GM12878 (cell line): ENCODE measurements at regions of chr12 and their contacts with region 1.

Region 1: DNA sequence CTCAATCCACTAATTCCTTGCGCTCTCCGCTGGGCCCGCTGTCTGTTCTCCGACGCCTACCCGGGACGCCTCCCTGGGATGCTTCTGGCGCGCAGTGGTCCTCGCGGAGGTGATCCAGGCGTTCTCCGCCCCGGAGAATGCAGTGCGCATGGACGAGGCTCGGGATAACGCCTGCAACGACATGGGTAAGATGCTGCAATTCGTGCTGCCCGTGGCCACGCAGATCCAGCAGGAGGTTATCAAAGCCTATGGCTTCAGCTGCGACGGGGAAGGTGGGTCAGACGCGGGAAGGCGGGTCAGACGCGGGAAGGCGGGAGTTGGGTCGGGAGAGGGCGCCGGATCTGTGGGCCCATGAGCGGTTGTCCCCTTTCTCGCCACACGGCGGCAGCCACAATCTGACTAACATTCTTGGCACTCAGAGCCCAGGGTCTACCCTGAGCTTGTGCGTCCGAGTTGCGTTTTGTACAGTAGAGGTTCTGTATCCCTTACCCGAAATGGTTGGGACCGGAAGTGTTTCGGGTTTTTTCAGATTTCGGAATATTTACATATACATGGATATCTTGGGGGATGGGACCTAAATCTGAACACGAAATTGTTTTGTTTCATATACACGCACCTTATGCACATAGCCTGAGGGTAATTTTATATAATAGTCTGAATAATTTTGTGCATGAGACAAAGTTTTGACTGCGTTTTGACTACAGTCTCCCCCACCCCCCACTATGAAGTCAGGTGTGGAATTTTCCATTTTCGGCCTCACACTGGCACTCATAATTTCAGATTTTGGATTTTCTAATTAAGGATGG is 762 bp downstream of the C12orf57 start:
- DNase-seq: peak; percentile 85
- ATAC-seq: peak; percentile 69
- H3K4me3 ChIP-seq: peak overlapping the region; percentile 78
- H3K27ac ChIP-seq: peak overlapping the region; percentile 91
- H3K4me1 ChIP-seq: peaks cover 36% of the 10 kb centered on the region
- H3K27me3 ChIP-seq: no peaks in the 10 kb centered on the region
- CTCF ChIP-seq: peak; percentile 85 to 99 (median 95); a peak in 5 of 6 replicates
- EP300 ChIP-seq: no peak
- POLR2A ChIP-seq: peak; percentile 87
- RAD21 ChIP-seq: peak; percentile 86

Region 2: GRCh38 chr12:6851921-6852650 is 92.5 kb before region 1 on chr12 and contains the start of gene USP5:
- CTCF ChIA-PET with region 1: interaction called, 3 read pairs
- POLR2A ChIA-PET with region 1: interaction called, 10 read pairs
- RAD21 ChIA-PET with region 1: interaction called, 16 read pairs
- SMC1A ChIA-PET with region 1: no interaction called
- in situ Hi-C with region 1: no loop called
- intact Hi-C with region 1: no loop called
- DNase-seq: peak; percentile 99
- ATAC-seq: peak; percentile 87
- H3K4me3 ChIP-seq: peak within 1 kb of the TSS; percentile 82
- H3K27ac ChIP-seq: peak within 1 kb of the TSS; percentile 84
- H3K4me1 ChIP-seq: peaks cover 28% of the 10 kb centered on the region
- H3K27me3 ChIP-seq: no peaks in the 10 kb centered on the region
- CTCF ChIP-seq: no peak
- EP300 ChIP-seq: no peak
- POLR2A ChIP-seq: peak; percentile 89
- RAD21 ChIP-seq: no peak
- polyA plus RNA-seq, gene USP5: 2.5 to 5.2 TPM

Region 3: DNA sequence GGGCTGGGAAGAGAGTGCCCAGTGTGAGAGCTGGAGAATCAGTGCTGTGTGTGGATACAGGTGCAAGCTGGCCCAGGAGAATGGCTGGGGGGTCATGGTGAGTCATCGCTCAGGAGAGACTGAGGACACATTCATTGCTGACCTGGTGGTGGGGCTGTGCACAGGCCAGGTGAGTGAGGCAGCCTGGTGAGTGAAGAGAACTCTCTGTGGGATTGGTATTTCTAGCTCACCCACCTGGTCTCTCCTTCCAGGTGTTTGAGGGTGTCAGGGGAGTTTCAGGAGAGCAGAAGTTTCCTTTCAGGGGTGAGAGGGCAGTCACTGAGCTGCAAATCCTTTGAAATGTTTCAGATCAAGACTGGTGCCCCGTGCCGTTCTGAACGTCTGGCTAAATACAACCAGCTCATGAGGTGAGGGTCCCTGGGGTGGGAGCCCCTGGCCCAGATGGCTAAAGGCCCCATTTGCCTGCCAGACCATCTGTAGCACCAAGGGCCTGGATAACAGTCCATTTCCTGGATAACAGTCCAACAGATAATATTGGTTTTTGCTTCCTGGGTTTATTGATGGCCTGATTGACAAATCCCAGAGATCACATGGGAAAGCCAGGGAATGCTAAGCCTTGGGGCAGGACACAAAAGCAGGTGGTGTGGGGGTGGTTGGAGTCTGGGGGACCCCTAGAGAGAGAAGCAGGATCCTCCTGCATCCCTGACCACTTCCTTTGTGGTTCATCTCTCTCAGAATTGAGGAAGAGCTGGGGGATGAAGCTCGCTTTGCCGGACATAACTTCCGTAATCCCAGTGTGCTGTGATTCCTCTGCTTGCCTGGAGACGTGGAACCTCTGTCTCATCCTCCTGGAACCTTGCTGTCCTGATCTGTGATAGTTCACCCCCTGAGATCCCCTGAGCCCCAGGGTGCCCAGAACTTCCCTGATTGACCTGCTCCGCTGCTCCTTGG is 22.3 kb before region 1 on chr12:
- CTCF ChIA-PET with region 1: interaction called, 111 read pairs
- POLR2A ChIA-PET with region 1: interaction called, 19 read pairs
- RAD21 ChIA-PET with region 1: interaction called, 45 read pairs
- SMC1A ChIA-PET with region 1: interaction called, 29 read pairs
- in situ Hi-C with region 1: no loop called
- intact Hi-C with region 1: loop called (anchors 2 kb)
- DNase-seq: no peak
- ATAC-seq: peak; percentile 32
- H3K4me3 ChIP-seq: peak overlapping the region; percentile 4; the same call in 1 of the 2 replicates
- H3K27ac ChIP-seq: peak overlapping the region; percentile 36
- H3K4me1 ChIP-seq: peaks cover 48% of the 10 kb centered on the region
- H3K27me3 ChIP-seq: no peaks in the 10 kb centered on the region
- CTCF ChIP-seq: 0 out of 6 replicates have a peak, but pooled peaks of 1 of the 3 experiments have one; percentile 13
- EP300 ChIP-seq: no peak
- POLR2A ChIP-seq: no peak
- RAD21 ChIP-seq: no peak

Region 4: DNA sequence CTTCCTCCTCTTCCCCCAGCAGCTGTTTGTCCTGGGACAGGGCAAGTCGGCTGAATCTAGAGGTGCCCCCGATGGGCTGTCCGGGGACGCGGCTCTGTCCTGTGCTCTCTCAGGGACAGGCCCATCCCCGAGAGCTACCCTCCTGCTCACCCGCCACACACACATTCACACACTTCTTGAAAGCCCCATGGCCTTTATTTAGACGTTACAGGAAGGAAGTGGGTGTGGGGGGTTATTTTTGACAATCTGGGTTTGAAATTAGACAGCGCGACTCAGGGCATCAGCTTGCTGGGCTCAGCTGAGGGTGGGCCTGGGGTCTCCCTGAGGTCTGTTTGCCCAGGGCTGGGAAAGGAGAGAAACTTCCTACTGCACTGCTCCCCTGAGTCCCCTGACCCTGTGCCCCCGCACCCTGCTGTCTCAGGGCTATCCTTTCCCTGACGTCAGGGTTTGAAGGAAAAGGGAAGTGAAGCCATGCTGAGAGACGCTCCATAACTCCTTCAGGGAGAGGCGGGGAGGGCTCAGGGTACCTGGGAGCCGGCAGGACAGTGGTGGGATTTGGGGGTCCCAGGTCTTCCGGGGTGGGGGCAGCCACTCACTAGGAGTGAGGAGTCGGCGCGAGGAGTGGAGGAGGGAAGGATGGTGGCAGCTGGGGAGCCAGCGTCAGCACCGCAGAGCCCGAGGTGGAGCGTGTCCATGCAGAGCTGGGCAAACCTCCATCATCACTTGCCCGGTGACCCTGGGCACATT is 14.6 kb after region 1 on chr12:
- CTCF ChIA-PET with region 1: interaction called, 645 read pairs
- POLR2A ChIA-PET with region 1: interaction called, 524 read pairs
- RAD21 ChIA-PET with region 1: interaction called, 426 read pairs
- SMC1A ChIA-PET with region 1: interaction called, 395 read pairs
- in situ Hi-C with region 1: no loop called
- intact Hi-C with region 1: loop called (anchors 1 kb)
- DNase-seq: no peak
- ATAC-seq: peak; percentile 66
- H3K4me3 ChIP-seq: peak overlapping the region; percentile 95
- H3K27ac ChIP-seq: peak overlapping the region; percentile 99
- H3K4me1 ChIP-seq: peaks cover 82% of the 10 kb centered on the region
- H3K27me3 ChIP-seq: no peaks in the 10 kb centered on the region
- CTCF ChIP-seq: no peak
- EP300 ChIP-seq: peak; percentile 73 to 80; a peak in 3 of 4 replicates
- POLR2A ChIP-seq: no peak
- RAD21 ChIP-seq: peak; percentile 15; the same call in 1 of the 2 replicates

Region 5: DNA sequence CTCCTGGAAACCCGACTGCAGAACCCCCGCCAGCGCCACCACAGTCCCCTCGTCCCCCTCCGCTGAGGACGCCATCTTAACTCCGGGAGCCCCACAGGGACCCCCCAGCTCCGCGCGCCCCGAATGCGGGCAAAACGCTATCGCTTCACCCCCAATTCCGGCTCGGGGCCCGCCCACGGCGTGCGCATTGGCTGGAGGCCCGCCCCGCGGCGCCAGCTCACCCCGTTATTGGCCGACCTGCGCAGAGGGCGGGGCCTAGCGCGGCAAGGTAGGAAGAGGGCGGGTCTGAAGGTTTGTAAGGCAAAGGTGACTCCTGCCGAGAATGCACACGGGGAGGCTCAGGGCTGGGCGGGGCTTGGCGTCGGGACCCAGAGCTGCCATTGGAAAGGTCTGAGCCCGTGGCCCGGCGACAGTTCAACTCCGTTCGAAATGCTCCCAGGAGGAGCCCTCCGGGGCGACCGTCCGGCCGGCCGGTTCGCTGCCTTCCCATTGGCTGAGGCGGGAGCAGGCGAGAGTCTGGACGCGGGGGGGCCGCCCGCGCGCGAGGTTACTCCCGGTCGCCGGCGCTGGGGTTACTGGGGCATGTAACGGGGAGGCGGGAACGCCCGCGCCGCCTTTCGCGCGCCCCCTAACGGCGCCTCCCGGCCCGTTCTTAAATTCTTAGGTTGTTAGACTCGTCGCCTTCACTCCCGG is 73.9 kb after region 1 on chr12 and contains the start of gene LPCAT3:
- CTCF ChIA-PET with region 1: interaction called, 7 read pairs
- POLR2A ChIA-PET with region 1: interaction called, 6 read pairs
- RAD21 ChIA-PET with region 1: interaction called, 14 read pairs
- SMC1A ChIA-PET with region 1: interaction called, 6 read pairs
- in situ Hi-C with region 1: no loop called
- intact Hi-C with region 1: loop called (anchors 2 kb)
- DNase-seq: peak; percentile 83
- ATAC-seq: peak; percentile 97
- H3K4me3 ChIP-seq: peak within 1 kb of the TSS; percentile 91
- H3K27ac ChIP-seq: peak within 1 kb of the TSS; percentile 75
- H3K4me1 ChIP-seq: no peaks in the 10 kb centered on the region
- H3K27me3 ChIP-seq: no peaks in the 10 kb centered on the region
- CTCF ChIP-seq: peak; percentile 82 to 90 (median 83); a peak in 5 of 6 replicates
- EP300 ChIP-seq: no peak
- POLR2A ChIP-seq: peak; percentile 86
- RAD21 ChIP-seq: peak; percentile 41
- polyA plus RNA-seq, gene LPCAT3: 2.6 to 3.7 TPM

Region 6: DNA sequence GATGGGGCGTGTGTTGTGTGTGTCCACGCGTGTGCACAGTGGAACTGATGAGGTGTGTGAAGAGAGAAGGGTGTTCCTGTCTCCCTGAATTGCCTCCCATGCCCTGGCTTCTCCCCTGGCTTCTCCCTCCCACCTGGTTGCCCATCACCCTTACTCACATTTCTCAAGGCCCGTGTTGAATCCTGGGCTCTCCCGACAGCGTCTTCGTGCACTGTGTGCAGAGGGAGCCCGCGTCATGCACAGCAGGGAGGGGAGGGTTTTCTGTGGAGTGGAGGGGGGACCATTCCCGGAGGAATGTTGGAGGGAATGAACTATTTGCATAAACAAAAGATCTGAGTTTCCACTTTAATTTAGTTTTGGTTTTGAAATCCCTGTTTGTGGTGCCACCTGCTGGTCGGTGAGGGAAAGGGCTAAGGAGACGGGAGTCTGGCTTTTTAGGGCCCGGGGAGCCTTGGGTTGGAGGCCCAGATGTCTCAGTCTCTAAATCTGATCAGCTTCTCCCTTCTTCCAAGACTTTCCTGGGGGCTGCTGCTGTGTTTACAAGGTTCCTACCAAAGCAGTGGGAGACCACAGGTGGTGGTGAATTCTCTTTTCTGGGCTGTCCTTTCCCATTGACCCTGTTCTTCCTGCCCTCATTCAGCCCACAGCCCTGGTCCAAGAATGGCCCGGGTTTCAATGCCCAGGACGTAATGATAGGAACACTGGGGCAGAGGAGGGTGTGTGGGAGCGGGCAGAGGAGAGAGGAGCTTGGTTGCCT is 147.8 kb after region 1 on chr12 and contains the start of gene C1R:
- CTCF ChIA-PET with region 1: interaction called, 32 read pairs
- POLR2A ChIA-PET with region 1: no interaction called
- RAD21 ChIA-PET with region 1: interaction called, 4 read pairs
- SMC1A ChIA-PET with region 1: interaction called, 5 read pairs
- in situ Hi-C with region 1: no loop called
- intact Hi-C with region 1: loop called (anchors 1 kb)
- DNase-seq: no peak
- ATAC-seq: peak; percentile 90
- H3K4me3 ChIP-seq: peak within 1 kb of the TSS; percentile 72; the same call in 1 of the 2 replicates
- H3K27ac ChIP-seq: no peak within 1 kb of the TSS; the same call in 1 of the 2 replicates
- H3K4me1 ChIP-seq: no peaks in the 10 kb centered on the region
- H3K27me3 ChIP-seq: no peaks in the 10 kb centered on the region; a peak in 1 of 4 replicates
- CTCF ChIP-seq: peak; percentile 85 to 89 (median 88)
- EP300 ChIP-seq: no peak
- POLR2A ChIP-seq: no peak; the same call in 1 of the 2 replicates
- RAD21 ChIP-seq: peak; percentile 76
- polyA plus RNA-seq, gene C1R: 0.31 TPM in 1 of 2 experiments, not detected in the other